ENCODE measurements at regions of chr4 and their contacts with region 1.

Region 1: DNA sequence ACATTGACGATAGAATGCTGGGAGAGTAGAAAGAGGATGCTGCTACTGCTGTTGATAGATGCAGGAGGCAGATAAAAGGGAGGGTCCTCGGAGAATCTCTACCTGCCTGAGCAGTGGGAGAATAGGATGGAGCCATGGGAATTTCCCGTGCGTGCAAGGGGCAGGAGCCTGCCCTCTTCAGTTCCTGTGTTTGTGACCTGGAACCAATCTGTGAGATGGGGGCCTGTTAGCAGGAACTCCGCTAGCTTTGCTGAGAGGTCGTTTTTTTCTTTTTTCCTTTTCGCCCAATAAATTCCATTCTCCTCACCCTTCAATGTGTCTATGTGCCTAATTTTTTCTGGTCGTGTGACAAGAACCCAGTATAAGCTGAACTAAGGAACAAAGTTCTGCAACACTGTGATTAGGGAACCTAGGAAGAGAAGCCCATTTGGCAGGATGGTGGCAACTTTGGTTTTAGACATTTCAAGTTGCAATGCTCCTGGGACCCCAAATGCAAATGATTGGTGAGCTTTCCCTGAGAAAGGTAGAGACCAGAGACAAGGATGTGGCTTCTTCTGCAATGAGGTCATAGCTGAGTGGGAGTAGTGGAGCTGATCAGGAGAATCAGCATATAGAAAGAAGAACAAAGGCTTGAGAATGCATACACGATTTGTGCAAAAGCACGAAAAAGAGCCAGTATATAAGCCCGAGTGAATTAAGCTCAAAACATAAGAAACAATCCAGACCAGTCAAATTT is 23.9 kb downstream of the SLC39A8 start:
- DNase-seq: peak; percentile 43
- CTCF ChIP-seq: no peak

Region 2: DNA sequence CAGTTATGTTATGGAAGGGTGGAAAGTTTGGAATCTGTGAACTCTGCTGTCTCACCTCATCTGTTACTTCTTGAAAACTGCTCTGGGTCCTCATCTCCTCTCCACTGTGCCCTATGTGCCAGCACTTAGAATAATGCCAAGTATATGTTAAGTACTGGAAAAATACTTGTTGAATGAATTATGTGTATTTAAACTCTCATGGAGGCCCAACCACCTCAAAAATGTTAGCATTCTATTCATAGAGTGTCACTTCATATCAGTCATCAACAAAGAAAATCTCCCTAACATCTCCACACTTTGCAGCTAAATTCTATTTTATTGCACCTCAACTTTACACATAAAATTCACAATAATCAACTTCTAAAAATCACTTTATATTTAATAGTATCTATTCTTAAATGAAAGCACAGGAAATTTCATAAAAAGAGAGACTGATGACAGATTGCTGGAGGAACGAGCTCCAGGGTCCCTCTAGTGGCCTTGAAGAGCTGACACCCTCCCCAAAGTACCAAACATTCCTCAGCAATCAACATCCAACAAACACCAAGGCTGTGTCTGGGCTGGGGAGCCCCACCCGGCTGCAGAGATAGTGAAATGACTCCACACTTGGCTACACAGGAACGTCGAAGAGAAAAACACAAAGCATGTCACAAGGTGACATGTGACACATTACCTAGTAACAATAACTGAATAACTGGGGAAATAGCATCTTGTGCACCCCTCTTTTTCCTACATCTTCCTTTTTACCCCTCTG is 21.9 kb before region 1 on chr4:
- CTCF ChIA-PET with region 1: interaction called, 23 read pairs
- POLR2A ChIA-PET with region 1: no interaction called
- DNase-seq: peak; percentile 30
- CTCF ChIP-seq: peak; percentile 72

Region 3: GRCh38 chr4:102333787-102334186 is 12.4 kb after region 1 on chr4:
- CTCF ChIA-PET with region 1: interaction called, 14 read pairs
- POLR2A ChIA-PET with region 1: no interaction called
- DNase-seq: no peak
- CTCF ChIP-seq: no peak

Measured in GM10248 (cell line).